ENCODE measurements at regions of chr6 and their contacts with region 1.

Region 1: DNA sequence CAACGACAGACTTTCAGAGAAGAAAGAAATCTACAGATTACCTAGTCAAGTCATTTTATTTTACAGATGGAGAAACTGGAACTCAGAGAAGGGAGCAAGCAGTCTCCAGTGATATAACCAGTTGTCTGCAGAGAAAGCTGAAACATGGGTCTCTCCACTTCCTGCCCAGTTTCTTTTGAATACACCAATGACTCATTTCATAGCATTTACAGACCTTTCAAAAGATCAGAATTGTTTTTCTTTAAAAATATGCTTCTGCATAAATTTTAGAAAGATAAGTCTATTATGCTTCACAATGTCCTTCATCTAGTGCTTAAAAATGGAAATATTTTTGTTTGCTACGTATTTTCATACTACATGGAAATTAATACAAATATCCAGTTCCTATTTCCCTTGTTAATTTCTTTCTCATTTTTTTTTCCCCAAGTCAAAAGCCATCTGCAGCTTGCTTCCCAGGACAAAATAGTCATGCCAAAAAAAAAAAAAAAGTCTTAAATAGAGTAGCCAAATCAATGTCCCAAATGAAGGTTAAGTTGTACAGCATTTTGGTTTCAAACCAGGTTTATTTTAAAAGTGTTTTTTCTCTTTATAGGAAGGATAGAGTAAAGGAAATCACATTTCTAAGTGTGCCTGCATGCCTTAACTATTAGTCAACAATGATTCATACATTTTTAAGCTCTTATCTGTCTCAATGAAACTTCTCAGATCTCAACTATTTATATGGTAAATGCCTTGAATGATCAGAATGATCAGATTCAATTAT is 36.9 kb downstream of the ARHGAP18 start:
- DNase-seq: peak in 3 of 9 experiments; percentile 14 to 59 (median 39)
- ATAC-seq: peak; percentile 58
- H3K4me3 ChIP-seq: no peak overlapping the region
- H3K4me3 Mint-ChIP-seq: peak overlapping the region; percentile 74
- H3K27ac ChIP-seq: peak overlapping the region in 1 of 2 experiments; percentile 59
- H3K27ac Mint-ChIP-seq: peak overlapping the region; percentile 85
- H3K4me1 ChIP-seq: peaks cover 21% of the 10 kb centered on the region
- H3K4me1 Mint-ChIP-seq: peaks cover 22% of the 10 kb centered on the region
- H3K27me3 ChIP-seq: no peaks in the 10 kb centered on the region
- H3K27me3 Mint-ChIP-seq: no peaks in the 10 kb centered on the region
- CTCF ChIP-seq: no peak

Region 2: DNA sequence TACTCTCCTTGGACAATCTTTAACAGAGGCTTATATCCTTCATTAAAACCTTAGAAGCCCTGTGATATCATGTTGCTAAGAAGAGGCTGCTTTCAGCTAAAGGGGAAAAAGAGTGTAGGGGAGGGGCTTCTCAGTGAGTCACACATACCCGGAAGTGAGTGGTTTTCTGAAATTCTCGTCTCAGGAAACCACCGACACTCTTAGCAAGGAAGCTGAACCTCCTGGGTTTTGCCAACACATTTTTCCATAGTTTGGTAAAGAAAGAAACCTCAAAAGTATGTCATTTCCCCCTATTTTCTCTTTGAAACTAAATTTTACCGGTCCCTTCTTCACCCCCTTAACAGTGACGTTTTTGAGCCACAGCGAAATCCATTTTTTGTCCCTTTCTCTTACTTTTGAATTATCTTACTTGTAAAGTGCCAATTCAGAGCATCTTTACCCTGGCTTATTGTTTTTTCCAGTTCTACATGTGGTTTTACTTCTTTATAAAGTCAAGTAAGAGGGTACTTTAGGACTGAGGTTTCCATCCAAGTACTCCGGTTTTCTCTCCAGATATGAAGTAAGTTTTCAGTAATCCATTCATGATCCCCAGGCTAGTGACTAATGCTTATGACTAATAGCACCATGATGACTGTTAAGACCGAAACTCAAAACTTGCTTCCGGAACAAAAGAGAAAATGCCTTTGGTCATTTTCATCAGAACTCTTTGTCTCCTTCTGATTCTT is 182.4 kb before region 1 on chr6:
- CTCF ChIA-PET with region 1: no interaction called
- POLR2A ChIA-PET with region 1: no interaction called
- intact Hi-C with region 1: loop called in 1 of 2 experiments (anchors 5 kb)
- DNase-seq: peak; percentile 6 to 94 (median 63)
- ATAC-seq: peak; percentile 93
- H3K4me3 ChIP-seq: peak overlapping the region; percentile 9 to 45
- H3K4me3 Mint-ChIP-seq: peak overlapping the region; percentile 85
- H3K27ac ChIP-seq: peak overlapping the region; percentile 54 to 93
- H3K27ac Mint-ChIP-seq: peak overlapping the region; percentile 95
- H3K4me1 ChIP-seq: peaks cover 24% of the 10 kb centered on the region
- H3K4me1 Mint-ChIP-seq: peaks cover 25% of the 10 kb centered on the region
- H3K27me3 ChIP-seq: no peaks in the 10 kb centered on the region
- H3K27me3 Mint-ChIP-seq: no peaks in the 10 kb centered on the region
- CTCF ChIP-seq: no peak

Region 3: DNA sequence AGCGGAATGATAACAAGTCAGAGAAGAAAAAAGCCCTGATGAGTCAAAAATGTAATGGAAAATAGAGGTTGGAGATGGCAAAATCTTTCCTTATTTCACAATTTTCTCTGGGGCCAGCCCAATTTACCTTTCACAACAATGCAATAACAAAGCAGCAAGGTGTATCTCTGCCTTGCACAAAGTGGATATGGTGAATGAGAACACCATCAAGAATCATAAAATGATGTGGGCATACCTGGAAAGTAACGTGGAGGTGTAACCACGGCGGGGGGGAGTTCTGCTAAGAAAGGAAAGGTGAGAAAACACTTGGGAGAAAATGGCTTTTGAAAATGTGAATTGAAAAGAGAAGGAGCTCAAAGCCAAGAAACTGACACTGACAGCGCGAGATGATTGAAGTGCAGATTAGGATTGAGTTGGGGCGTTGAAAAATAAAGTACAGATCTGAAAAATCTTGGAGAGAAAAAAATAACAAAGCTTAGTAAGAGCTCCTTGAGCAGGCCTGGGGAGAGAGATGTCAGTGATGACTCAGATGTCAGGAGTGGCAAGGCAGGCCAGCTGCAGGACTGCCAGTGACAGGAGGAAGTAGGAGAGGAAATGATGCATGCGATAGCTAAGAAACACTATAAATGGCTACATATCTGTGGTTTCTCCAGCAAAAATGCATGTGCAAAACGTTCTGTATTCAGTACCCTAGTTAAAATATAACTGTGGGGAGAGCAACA is 10.7 kb after region 1 on chr6:
- CTCF ChIA-PET with region 1: no interaction called
- POLR2A ChIA-PET with region 1: interaction called, 4 read pairs
- intact Hi-C with region 1: loop called (anchors 1 to 2 kb)
- DNase-seq: peak; percentile 13 to 88 (median 68)
- ATAC-seq: peak; percentile 89
- H3K4me3 ChIP-seq: no peak overlapping the region
- H3K4me3 Mint-ChIP-seq: no peak overlapping the region
- H3K27ac ChIP-seq: peak overlapping the region in 1 of 2 experiments; percentile 75
- H3K27ac Mint-ChIP-seq: peak overlapping the region; percentile 53
- H3K4me1 ChIP-seq: peaks cover 42% of the 10 kb centered on the region
- H3K4me1 Mint-ChIP-seq: peaks cover 42% of the 10 kb centered on the region
- H3K27me3 ChIP-seq: no peaks in the 10 kb centered on the region
- H3K27me3 Mint-ChIP-seq: no peaks in the 10 kb centered on the region
- CTCF ChIP-seq: no peak

Region 4: GRCh38 chr6:129709769-129710449 is 36.8 kb after region 1 on chr6 and contains the start of gene ARHGAP18:
- CTCF ChIA-PET with region 1: interaction called, 4 read pairs
- POLR2A ChIA-PET with region 1: interaction called, 3 read pairs
- intact Hi-C with region 1: loop called (anchors 5 kb)
- DNase-seq: peak; percentile 36 to 81 (median 63)
- ATAC-seq: peak; percentile 90
- H3K4me3 ChIP-seq: peak within 1 kb of the TSS; percentile 64 to 79
- H3K4me3 Mint-ChIP-seq: peak within 1 kb of the TSS; percentile 93
- H3K27ac ChIP-seq: peak within 1 kb of the TSS; percentile 8 to 56
- H3K27ac Mint-ChIP-seq: peak within 1 kb of the TSS; percentile 70
- H3K4me1 ChIP-seq: peaks cover 7% of the 10 kb centered on the region
- H3K4me1 Mint-ChIP-seq: peaks cover 34% of the 10 kb centered on the region
- H3K27me3 ChIP-seq: no peaks in the 10 kb centered on the region
- H3K27me3 Mint-ChIP-seq: no peaks in the 10 kb centered on the region
- CTCF ChIP-seq: no peak
- total RNA-seq, gene ARHGAP18: 0.71 to 1.5 TPM

Region 5: DNA sequence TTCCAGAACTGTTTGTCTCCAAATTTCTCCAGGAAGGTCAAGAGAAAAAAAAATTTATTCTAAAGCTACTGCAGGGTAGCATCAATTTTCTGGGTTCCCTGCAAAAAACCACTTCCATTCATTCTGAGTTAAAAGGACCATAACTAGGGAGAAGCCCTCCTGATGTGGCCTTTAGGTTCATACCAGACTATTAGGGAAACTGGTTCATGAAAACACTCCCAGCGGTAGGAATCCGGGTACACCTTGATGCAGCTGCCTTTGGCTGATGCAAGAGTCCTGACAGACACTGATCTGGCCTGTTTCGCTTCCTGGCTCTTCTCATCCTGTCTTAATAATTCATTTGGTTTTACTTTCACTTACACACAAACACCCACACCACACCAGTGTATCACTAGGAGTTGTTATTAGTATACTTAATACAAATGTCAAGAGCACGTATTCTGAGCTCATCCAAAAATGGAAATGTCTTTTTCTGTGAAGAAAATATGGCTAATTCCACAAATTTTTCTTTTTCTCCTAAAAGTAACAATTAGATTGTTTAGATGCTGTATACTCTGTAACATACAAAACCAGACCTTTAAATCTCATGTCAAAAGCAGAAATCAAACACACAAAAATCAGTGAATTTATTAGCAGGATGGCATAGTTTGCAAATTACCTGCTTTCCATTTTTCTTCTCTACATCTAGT is 75.3 kb after region 1 on chr6:
- CTCF ChIA-PET with region 1: interaction called, 5 read pairs
- POLR2A ChIA-PET with region 1: interaction called, 4 read pairs
- intact Hi-C with region 1: loop called in 1 of 2 experiments (anchors 1 kb)
- DNase-seq: peak in 8 of 9 experiments; percentile 25 to 85 (median 48)
- ATAC-seq: peak; percentile 84
- H3K4me3 ChIP-seq: peak overlapping the region; percentile 6 to 25
- H3K4me3 Mint-ChIP-seq: peak overlapping the region; percentile 66
- H3K27ac ChIP-seq: peak overlapping the region; percentile 49 to 87
- H3K27ac Mint-ChIP-seq: peak overlapping the region; percentile 82
- H3K4me1 ChIP-seq: peaks cover 53% of the 10 kb centered on the region
- H3K4me1 Mint-ChIP-seq: peaks cover 60% of the 10 kb centered on the region
- H3K27me3 ChIP-seq: no peaks in the 10 kb centered on the region
- H3K27me3 Mint-ChIP-seq: no peaks in the 10 kb centered on the region
- CTCF ChIP-seq: no peak

Measured in CD8-positive, alpha-beta T cell (primary cell).